Naive thymus-derived CD8-positive, alpha-beta T cell (primary cell): ENCODE measurements at regions of chr6 and their contacts with region 1.

Region 1: DNA sequence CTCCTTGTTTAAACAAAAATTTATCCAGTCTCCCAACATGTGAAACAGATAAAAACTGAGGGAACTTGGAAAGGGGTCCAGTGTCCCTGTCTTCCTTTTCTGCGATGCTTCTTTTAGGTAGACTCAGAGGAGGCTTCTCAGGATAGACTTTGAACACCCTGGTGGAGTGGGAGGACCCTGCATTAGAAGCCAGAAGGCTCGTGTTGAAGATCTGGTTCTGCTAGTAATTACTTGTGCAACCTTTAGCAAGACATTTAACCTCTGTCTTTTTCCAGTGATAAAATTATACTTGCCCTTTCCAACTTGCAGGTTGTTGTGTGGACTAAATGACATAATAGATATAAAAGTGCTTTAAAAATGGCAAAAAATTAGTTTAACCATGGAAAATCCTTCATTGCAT is 67.1 kb upstream of the PREP start:
- DNase-seq: no peak
- ATAC-seq: no peak
- H3K4me3 Mint-ChIP-seq: no peak overlapping the region
- H3K27ac Mint-ChIP-seq: peak overlapping the region in 1 of 10 donors; percentile 44
- H3K4me1 Mint-ChIP-seq: no peaks in the 10 kb centered on the region
- H3K27me3 Mint-ChIP-seq: peaks cover 0 to 12% (median 11%) of the 10 kb centered on the region in 5 donors

Region 2: GRCh38 chr6:105445481-105445880 is 24.5 kb before region 1 on chr6:
- POLR2A ChIA-PET with region 1: interaction called, 10 read pairs
- DNase-seq: no peak
- ATAC-seq: no peak
- H3K4me3 Mint-ChIP-seq: no peak overlapping the region
- H3K27ac Mint-ChIP-seq: no peak overlapping the region
- H3K4me1 Mint-ChIP-seq: peaks cover 0 to 1% (median 0%) of the 10 kb centered on the region in 4 donors
- H3K27me3 Mint-ChIP-seq: peaks cover 0 to 2% (median 0%) of the 10 kb centered on the region in 5 donors

Region 3: GRCh38 chr6:105573138-105573537 is 103.2 kb after region 1 on chr6:
- POLR2A ChIA-PET with region 1: no interaction called
- DNase-seq: no peak
- ATAC-seq: no peak
- H3K4me3 Mint-ChIP-seq: no peak overlapping the region
- H3K27ac Mint-ChIP-seq: no peak overlapping the region
- H3K4me1 Mint-ChIP-seq: no peaks in the 10 kb centered on the region
- H3K27me3 Mint-ChIP-seq: peaks cover 5 to 26% (median 19%) of the 10 kb centered on the region in 5 donors